Activated CD8-positive, alpha-beta T cell treated with anti-CD3 and anti-CD28 coated beads, Interleukin-2, amount 10 ng/mL, durations not matched to agents 7 days and 5 days (primary cell): ENCODE measurements at regions of chr3 and their contacts with region 1.

Region 1: DNA sequence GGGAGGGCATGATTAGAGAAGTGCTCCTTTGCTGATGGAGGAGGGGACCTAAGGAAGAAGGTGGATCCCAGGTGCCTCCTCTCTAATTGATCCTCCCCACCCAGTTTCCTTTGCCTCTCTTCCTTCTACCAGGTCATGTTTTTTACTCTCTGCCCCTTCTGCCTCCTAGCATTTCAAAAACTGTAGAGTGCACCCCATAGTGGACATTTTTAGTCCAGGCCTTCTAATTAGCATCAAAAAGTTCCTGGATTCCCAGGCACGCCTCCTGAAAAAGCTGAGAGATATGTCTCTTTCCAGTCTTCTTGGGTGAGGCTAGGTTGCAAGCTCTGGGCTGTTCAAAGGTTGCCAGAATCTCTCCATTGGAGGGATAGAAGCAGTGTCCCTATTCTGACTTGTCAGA is 18.7 kb upstream of the ITGB5 start:
- DNase-seq: no peak
- ATAC-seq: no peak
- H3K4me3 Mint-ChIP-seq: no peak overlapping the region
- H3K27ac Mint-ChIP-seq: no peak overlapping the region
- H3K4me1 Mint-ChIP-seq: peaks cover 7% of the 10 kb centered on the region
- H3K27me3 Mint-ChIP-seq: peaks cover 25% of the 10 kb centered on the region

Region 2: DNA sequence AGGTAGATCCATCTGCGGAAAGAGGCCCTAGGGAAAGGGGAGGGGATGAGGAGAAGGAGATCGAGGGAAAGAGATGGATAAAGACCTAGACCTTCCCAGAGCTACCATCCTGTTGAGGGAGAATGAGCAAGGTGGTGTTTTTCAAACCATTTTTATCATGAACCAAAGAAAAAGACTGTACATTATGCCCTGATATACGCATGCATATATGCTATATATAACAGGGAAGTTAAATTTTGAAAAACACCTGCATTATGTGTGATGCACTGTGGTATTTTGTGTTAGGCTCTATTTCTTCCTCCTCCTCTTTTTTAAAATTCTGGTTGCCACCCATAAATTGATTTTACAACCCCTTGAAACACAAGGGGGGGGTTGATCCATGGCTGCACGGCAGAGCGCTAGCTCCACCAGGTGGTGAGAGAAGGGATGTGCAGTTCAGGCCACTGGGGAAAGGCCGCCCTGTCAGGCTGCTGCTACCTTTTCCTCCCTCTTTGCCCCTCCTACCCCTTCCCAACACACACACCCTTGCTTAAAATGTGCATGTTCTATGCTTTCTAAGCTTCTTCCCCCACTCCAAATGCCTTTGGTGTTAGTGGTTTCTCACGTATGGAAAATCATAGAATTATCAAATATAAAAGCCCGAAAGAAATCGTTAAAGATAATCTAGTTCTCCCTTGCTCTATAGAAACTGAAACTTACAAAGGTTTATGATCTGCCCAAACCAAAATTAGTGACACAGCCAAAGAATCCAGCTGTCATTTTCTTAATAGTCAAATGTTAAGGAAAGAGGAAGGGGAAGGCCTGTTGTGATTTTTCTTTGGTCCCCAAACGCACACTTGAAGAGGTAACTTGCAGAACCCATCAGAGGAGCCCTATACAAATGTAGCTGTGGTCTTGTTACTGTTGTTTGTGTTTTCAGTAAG is 437.6 kb before region 1 on chr3:
- CTCF ChIA-PET with region 1: no interaction called
- POLR2A ChIA-PET with region 1: no interaction called
- DNase-seq: peak; percentile 45
- ATAC-seq: peak; percentile 61
- H3K4me3 Mint-ChIP-seq: no peak overlapping the region
- H3K27ac Mint-ChIP-seq: no peak overlapping the region
- H3K4me1 Mint-ChIP-seq: no peaks in the 10 kb centered on the region
- H3K27me3 Mint-ChIP-seq: peaks cover 17% of the 10 kb centered on the region

Region 3: DNA sequence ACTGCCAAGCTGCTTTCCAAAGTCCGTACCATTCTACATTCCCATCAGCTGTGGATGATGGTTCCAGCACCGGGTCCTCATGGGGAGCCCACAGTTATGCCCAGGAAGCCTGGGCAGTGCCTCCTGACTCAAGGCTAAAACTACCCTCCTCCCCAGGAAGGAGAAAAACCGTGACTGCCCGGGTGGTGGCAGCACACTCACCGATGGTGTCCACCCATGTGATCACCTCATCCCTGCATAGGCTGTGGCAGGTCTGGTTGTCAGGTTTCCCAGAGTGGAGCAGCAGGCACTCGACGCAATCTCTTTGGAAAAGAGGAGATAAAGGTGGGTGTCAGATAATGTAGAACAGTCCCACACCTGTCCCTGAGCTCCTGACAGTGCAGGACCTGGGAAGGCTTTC is 137.0 kb before region 1 on chr3:
- CTCF ChIA-PET with region 1: interaction called, 194 read pairs
- POLR2A ChIA-PET with region 1: interaction called, 3 read pairs
- DNase-seq: peak; percentile 37
- ATAC-seq: peak; percentile 39
- H3K4me3 Mint-ChIP-seq: no peak overlapping the region
- H3K27ac Mint-ChIP-seq: no peak overlapping the region
- H3K4me1 Mint-ChIP-seq: no peaks in the 10 kb centered on the region
- H3K27me3 Mint-ChIP-seq: peaks cover 19% of the 10 kb centered on the region

Region 4: DNA sequence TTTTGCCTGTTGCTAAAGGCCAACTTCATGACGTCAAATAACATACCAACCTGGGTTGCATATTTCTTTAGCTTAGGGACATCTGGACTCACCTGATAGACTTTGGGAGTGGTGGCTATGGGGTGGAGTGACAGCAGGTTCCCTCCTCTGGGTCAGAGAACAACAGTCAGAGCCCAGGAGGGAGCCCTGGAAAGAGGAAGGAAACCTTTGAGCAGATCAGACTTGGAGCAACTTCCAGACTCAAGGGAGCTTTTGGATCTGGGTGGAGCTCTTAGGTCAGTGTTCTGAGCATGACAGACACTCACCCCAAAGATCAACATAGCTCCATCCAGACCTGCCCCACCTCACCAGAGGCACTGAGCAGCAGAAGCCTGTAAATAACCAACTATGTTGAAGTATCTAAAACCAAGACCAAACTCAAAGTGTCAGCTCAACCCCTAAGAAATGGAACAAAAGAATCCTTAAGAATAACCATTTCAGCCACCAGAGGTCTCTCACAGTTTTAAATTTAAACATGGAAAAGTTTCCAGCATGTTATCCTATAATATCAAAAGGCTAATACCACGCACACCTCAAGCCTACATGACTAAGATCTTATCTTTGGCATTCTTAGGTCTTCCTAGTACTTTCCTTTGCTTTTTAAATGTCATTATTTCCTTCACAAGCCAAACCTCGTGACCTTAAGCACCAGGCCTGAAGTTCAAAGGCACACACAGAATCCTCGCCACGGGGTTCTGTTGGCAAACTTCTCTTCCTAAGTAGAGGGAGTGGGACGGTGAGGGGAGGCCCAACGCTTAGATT is 119.2 kb before region 1 on chr3:
- CTCF ChIA-PET with region 1: interaction called, 21 read pairs
- POLR2A ChIA-PET with region 1: no interaction called
- DNase-seq: no peak
- ATAC-seq: no peak
- H3K4me3 Mint-ChIP-seq: no peak overlapping the region
- H3K27ac Mint-ChIP-seq: no peak overlapping the region
- H3K4me1 Mint-ChIP-seq: peaks cover 8% of the 10 kb centered on the region
- H3K27me3 Mint-ChIP-seq: peaks cover 13% of the 10 kb centered on the region

Region 5: DNA sequence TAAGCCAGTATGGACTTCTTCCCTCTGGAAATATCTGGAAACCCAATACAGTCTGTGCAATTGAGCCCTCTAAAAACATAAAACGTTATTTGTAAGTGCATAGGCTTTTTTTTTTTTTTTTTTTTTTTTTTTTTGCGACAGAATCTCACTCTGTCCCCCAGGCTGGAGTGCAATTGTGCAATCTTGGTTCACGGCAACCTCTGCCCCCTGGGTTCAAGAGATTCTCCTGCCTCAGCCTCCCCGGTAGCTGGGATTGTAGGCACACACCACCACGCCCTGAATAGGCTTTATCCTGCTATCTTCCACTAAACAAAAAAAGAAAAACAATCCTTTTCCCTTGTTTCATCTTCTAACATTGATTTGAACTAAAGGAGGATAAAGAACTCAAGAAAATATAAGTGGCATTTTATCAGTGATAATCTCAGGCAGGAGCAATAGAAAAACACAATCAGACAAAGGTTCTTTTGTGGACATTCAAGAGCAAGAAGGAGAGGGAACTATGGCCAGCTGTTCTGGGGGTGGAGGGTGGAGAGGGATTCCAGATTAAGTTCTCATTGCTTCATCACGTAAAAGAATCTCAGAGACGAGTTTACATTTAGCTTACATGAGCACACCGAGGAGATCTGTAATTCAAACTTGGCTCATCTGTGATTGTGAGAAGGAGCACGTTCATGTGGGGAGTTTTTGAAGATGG is 87.3 kb before region 1 on chr3:
- CTCF ChIA-PET with region 1: no interaction called
- POLR2A ChIA-PET with region 1: no interaction called
- DNase-seq: no peak
- ATAC-seq: no peak
- H3K4me3 Mint-ChIP-seq: no peak overlapping the region
- H3K27ac Mint-ChIP-seq: no peak overlapping the region
- H3K4me1 Mint-ChIP-seq: no peaks in the 10 kb centered on the region
- H3K27me3 Mint-ChIP-seq: peaks cover 16% of the 10 kb centered on the region

Region 6: GRCh38 chr3:124890282-124891190 is 15.3 kb before region 1 on chr3:
- CTCF ChIA-PET with region 1: interaction called, 15 read pairs
- POLR2A ChIA-PET with region 1: no interaction called
- DNase-seq: no peak
- ATAC-seq: no peak
- H3K4me3 Mint-ChIP-seq: no peak overlapping the region
- H3K27ac Mint-ChIP-seq: no peak overlapping the region
- H3K4me1 Mint-ChIP-seq: no peaks in the 10 kb centered on the region
- H3K27me3 Mint-ChIP-seq: peaks cover 36% of the 10 kb centered on the region

Region 7: GRCh38 chr3:124916837-124917409 is 11.1 kb after region 1 on chr3:
- CTCF ChIA-PET with region 1: interaction called, 21 read pairs
- POLR2A ChIA-PET with region 1: no interaction called
- DNase-seq: no peak
- ATAC-seq: no peak
- H3K4me3 Mint-ChIP-seq: no peak overlapping the region
- H3K27ac Mint-ChIP-seq: no peak overlapping the region
- H3K4me1 Mint-ChIP-seq: no peaks in the 10 kb centered on the region
- H3K27me3 Mint-ChIP-seq: peaks cover 25% of the 10 kb centered on the region